Activated CD8-positive, alpha-beta T cell treated with anti-CD3 and anti-CD28 coated beads for 36 hours (primary cell): ENCODE measurements at regions of chr6 and their contacts with region 1.

Region 1: GRCh38 chr6:42104095-42104806 is 38.2 kb downstream of the C6orf132 start:
- DNase-seq: peak; percentile 86
- ATAC-seq: peak; percentile 76
- H3K4me3 Mint-ChIP-seq: peak overlapping the region; percentile 71
- H3K27ac Mint-ChIP-seq: peak overlapping the region; percentile 78
- H3K4me1 Mint-ChIP-seq: peaks cover 26% of the 10 kb centered on the region
- H3K27me3 Mint-ChIP-seq: no peaks in the 10 kb centered on the region
- CTCF ChIP-seq: peak; percentile 99

Region 2: DNA sequence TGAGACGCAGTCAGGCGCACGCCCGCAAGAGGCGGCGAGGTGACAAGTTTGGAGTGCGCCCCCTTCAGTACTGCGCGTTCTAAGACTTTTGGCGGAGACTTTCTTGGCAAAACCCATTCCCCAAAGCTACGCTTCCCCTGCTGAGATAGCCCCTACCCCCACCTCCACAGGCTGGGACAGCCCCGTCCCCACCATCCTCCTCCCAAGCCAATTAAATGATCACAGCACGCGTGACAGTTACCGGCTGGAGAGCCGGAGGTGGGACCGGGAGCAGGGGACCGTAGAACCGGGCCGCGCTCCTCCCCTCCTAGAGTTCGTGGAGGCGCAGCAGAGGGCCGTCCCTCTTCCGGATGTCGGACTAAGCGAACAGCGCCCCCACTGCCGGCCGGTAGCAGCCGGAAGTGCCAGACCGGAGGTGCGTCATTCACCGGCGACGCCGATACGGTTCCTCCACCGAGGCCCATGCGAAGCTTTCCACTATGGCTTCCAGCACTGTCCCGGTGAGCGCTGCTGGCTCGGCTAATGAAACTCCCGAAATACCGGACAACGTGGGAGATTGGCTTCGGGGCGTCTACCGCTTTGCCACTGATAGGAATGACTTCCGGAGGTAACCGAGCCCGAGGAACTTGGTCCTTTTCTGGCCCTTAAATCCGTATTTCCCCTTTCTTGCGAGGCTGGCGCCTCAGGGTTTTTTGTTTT is 316.9 kb before region 1 on chr6 and contains the start of gene TOMM6:
- CTCF ChIA-PET with region 1: interaction called, 12 read pairs
- POLR2A ChIA-PET with region 1: interaction called, 6 read pairs
- intact Hi-C with region 1: no loop called
- DNase-seq: peak; percentile 97
- ATAC-seq: peak; percentile 86
- H3K4me3 Mint-ChIP-seq: peak within 1 kb of the TSS; percentile 91
- H3K27ac Mint-ChIP-seq: peak within 1 kb of the TSS; percentile 97
- H3K4me1 Mint-ChIP-seq: peaks cover 19% of the 10 kb centered on the region
- H3K27me3 Mint-ChIP-seq: no peaks in the 10 kb centered on the region
- CTCF ChIP-seq: peak; percentile 86
- total RNA-seq, gene TOMM6: 310 to 314 TPM

Region 3: GRCh38 chr6:42017021-42017643 is 87.1 kb before region 1 on chr6:
- CTCF ChIA-PET with region 1: no interaction called
- POLR2A ChIA-PET with region 1: no interaction called
- intact Hi-C with region 1: no loop called
- DNase-seq: peak; percentile 74
- ATAC-seq: peak; percentile 66
- H3K4me3 Mint-ChIP-seq: peak overlapping the region; percentile 50
- H3K27ac Mint-ChIP-seq: peak overlapping the region; percentile 84
- H3K4me1 Mint-ChIP-seq: peaks cover 71% of the 10 kb centered on the region
- H3K27me3 Mint-ChIP-seq: no peaks in the 10 kb centered on the region
- CTCF ChIP-seq: no peak

Region 4: DNA sequence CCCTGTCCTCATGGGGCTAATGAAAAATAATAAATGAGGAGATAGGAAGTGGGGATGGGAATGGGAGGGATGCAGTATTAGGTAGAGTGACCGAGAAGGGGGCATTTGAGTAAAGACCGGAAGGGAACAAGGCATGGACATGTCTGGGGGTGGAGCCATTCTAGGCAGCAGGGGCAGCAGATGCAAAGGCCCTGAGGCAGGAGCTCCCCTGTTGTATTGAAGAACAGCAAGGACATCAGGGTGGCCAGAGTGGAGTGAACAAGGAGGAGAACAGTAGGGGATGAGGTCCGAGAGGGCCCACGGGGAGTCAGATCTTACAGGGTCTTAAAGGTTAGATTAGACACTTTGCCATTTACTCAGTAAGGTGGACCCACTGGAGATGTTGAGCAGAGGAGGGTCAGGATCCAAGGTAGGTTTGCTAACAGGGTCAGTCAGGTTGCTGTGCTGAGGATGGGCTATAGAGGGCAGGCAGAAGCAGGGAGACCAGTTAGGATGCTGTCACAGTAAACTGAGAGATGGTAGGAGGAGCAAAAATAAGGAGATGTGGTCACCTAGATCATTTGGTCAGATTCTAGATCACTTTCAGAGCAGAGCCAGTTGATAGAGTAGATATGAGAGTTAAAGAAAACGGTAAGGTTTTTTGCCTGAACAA is 35.3 kb before region 1 on chr6:
- CTCF ChIA-PET with region 1: interaction called, 22 read pairs
- POLR2A ChIA-PET with region 1: no interaction called
- intact Hi-C with region 1: loop called (anchors 5 kb)
- DNase-seq: no peak
- ATAC-seq: no peak
- H3K4me3 Mint-ChIP-seq: no peak overlapping the region
- H3K27ac Mint-ChIP-seq: no peak overlapping the region
- H3K4me1 Mint-ChIP-seq: no peaks in the 10 kb centered on the region
- H3K27me3 Mint-ChIP-seq: no peaks in the 10 kb centered on the region
- CTCF ChIP-seq: no peak

Region 5: GRCh38 chr6:42086046-42087035 is 17.9 kb before region 1 on chr6:
- CTCF ChIA-PET with region 1: interaction called, 50 read pairs
- POLR2A ChIA-PET with region 1: interaction called, 3 read pairs
- intact Hi-C with region 1: no loop called
- DNase-seq: no peak
- ATAC-seq: no peak
- H3K4me3 Mint-ChIP-seq: no peak overlapping the region
- H3K27ac Mint-ChIP-seq: no peak overlapping the region
- H3K4me1 Mint-ChIP-seq: no peaks in the 10 kb centered on the region
- H3K27me3 Mint-ChIP-seq: no peaks in the 10 kb centered on the region
- CTCF ChIP-seq: no peak

Region 6: DNA sequence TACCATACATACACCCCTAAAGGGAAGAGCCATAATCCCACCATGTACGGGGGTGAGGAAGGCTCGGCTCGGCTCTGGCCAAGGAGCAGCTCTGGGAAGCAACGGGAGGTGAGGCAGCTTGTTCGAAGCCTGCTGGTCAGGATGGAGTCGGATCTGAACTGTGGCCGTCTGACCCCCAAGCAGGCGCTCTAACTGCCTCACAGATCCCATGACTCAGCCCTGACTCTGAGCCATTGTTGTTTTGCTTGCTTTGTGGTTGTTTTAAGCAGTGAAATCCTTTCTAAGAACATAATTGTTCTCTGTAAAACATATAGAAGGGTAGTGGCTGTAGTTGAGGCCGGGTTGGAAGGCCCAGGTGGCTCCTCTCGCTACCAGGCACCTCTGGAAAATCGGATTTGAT is 27.3 kb after region 1 on chr6:
- CTCF ChIA-PET with region 1: interaction called, 20 read pairs
- POLR2A ChIA-PET with region 1: interaction called, 3 read pairs
- intact Hi-C with region 1: no loop called
- DNase-seq: no peak
- ATAC-seq: no peak
- H3K4me3 Mint-ChIP-seq: no peak overlapping the region
- H3K27ac Mint-ChIP-seq: no peak overlapping the region
- H3K4me1 Mint-ChIP-seq: peaks cover 3% of the 10 kb centered on the region
- H3K27me3 Mint-ChIP-seq: no peaks in the 10 kb centered on the region
- CTCF ChIP-seq: no peak

Region 7: DNA sequence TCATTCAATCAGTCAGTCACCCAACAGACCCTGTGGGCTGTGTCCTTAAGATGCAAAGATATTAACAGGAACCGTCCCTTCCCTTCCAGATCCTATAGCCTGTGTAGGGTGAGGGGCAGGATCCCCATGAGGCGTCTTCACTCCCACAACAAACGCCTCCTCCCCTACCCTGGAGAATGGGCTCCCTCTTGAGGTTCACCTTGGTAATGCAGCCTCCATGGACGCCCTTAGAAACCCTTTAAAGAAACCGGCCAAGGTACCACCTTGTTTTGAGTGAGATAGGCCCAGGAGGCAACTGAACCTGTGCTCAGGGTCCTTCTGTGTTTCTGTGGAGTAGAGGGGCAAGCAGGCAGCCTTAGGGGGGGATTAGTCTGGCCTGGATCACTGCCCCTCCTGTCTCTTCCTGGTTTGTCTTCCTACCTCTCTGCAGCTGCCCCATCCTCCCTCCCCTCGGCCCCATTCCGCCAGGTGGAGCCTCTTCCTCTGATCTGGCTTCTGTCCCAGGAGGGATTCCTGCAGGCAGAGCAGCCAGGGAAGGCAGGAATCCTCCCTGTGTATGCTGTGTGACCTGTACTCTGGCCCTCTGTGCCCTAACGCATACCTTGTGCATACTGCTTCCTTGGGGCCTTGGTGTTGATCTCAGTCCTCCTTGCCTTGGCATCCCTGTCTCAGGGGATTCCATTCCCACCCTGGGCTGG is 62.3 kb after region 1 on chr6:
- CTCF ChIA-PET with region 1: interaction called, 38 read pairs
- POLR2A ChIA-PET with region 1: no interaction called
- intact Hi-C with region 1: no loop called
- DNase-seq: peak; percentile 89
- ATAC-seq: peak; percentile 98
- H3K4me3 Mint-ChIP-seq: no peak overlapping the region
- H3K27ac Mint-ChIP-seq: no peak overlapping the region
- H3K4me1 Mint-ChIP-seq: no peaks in the 10 kb centered on the region
- H3K27me3 Mint-ChIP-seq: no peaks in the 10 kb centered on the region
- CTCF ChIP-seq: peak; percentile 94

Region 8: DNA sequence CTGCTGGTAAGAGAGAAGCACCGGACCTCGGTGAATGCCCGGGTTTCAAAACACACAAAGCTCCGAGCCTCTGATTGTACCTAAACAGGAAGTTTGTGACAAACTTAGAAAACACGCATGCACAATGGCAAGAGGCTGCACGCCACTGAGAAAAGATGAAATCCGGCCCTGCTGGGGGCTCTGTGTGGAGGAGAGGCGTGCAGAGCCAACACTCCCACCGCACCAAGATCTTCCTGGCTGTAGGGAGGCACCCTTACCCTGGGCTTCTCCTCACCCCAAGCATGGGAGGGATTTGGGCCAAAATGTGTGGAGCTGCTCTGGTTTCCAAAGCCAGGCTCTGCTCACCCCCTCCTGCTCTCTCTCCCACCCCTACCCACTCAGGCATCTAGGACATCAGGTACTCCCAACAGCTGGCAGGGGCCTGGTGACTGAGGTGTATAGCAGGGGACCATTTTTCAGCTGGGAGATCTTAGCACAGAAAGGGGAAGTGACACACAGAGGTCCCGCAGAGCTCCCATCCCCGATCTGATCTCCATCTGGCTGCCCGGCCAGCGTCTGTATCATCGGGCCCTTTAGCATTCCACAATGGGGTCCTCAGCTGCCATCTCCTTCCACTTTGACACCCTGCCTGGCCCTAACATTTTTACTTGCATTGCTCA is 263.2 kb after region 1 on chr6:
- CTCF ChIA-PET with region 1: no interaction called
- POLR2A ChIA-PET with region 1: no interaction called
- intact Hi-C with region 1: no loop called
- DNase-seq: peak; percentile 40
- ATAC-seq: peak; percentile 50
- H3K4me3 Mint-ChIP-seq: peak overlapping the region; percentile 69
- H3K27ac Mint-ChIP-seq: peak overlapping the region; percentile 93
- H3K4me1 Mint-ChIP-seq: peaks cover 59% of the 10 kb centered on the region
- H3K27me3 Mint-ChIP-seq: no peaks in the 10 kb centered on the region
- CTCF ChIP-seq: no peak